ENCODE measurements at regions of chr5 and their contacts with region 1.

Region 1: GRCh38 chr5:115033861-115034260 is 135.8 kb downstream of the TRIM36 start:
- H3K4me3 Mint-ChIP-seq: no peak overlapping the region
- H3K27ac Mint-ChIP-seq: no peak overlapping the region
- H3K4me1 Mint-ChIP-seq: no peaks in the 10 kb centered on the region
- H3K27me3 Mint-ChIP-seq: peaks cover 3% of the 10 kb centered on the region

Region 2: GRCh38 chr5:114789773-114790402 is 244.0 kb before region 1 on chr5:
- intact Hi-C with region 1: loop called (anchors 10 kb)
- H3K4me3 Mint-ChIP-seq: no peak overlapping the region
- H3K27ac Mint-ChIP-seq: no peak overlapping the region
- H3K4me1 Mint-ChIP-seq: no peaks in the 10 kb centered on the region
- H3K27me3 Mint-ChIP-seq: no peaks in the 10 kb centered on the region

Region 3: DNA sequence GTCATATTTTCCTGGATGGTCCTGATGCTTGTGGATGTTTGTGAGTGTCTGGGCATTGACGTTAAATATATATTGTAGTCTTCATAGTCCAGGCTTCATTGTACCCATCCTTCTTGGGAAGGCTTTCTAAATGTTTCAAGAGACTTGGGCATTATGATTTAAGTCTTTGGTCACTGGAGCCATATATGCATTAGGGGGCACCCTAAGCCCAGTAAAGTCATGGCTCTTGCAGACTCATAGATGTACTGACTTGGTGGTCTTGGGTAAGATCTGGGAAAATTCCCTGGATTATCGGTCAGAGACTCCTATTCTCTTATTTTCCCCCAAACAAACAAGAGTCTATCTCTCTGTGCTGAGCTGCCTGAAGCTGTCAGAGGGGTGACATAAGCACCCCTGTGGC is 135.3 kb before region 1 on chr5:
- intact Hi-C with region 1: loop called (anchors 10 kb)
- H3K4me3 Mint-ChIP-seq: no peak overlapping the region
- H3K27ac Mint-ChIP-seq: no peak overlapping the region
- H3K4me1 Mint-ChIP-seq: no peaks in the 10 kb centered on the region
- H3K27me3 Mint-ChIP-seq: no peaks in the 10 kb centered on the region

Region 4: DNA sequence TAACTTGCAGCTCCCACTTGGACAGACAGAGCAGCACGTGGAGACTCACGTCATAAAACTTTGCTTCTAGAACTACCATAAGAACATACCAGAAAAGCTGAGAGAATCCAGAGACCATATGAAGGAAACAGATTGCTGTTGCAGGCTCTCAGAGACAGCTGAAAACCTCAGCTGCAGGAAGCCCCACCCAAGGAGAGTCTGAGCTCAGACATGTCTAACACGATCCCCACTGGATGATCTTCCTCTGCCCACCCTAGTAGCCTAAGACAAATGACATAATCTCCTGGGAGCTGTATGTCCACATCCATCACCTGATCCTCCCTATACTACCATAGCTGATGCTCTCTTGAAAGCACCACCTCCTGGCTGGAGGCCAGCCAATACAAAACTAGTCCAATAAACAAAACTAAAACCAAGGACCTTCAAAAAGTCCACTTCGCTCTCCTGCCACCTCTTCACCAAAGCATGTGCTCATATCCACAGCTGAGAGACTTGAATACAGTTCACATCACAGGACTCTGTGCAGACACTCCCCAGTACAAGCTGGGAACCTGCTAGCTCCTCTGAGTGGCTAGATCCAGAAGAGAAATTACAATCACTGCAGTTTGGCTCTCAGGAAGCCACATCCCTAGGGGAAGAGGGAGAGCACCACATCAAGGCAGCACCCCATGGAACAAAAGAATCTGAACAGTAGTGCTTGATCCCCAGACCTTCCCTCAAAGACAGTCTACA is 121.5 kb before region 1 on chr5:
- intact Hi-C with region 1: no loop called
- H3K4me3 Mint-ChIP-seq: no peak overlapping the region
- H3K27ac Mint-ChIP-seq: no peak overlapping the region
- H3K4me1 Mint-ChIP-seq: no peaks in the 10 kb centered on the region
- H3K27me3 Mint-ChIP-seq: no peaks in the 10 kb centered on the region

Region 5: DNA sequence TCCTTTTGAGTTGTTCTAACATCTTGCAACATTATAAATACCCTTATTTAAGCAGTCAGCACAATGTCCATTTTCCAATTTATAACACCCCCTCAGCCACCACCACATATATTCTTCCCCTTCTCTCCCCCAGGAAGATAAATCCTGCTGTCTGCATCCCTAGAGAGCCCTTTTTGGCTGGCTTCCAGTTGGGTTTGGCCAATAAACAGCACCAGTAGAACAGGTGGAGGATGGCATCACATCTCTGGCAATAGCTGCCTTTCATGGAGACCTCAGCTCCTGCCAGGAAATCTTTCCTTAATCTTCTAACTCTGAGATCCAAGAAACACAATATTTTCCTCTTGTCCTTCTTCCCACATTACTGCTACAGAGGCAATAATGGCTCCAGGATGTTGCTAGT is 82.1 kb after region 1 on chr5:
- intact Hi-C with region 1: no loop called
- H3K4me3 Mint-ChIP-seq: no peak overlapping the region
- H3K27ac Mint-ChIP-seq: no peak overlapping the region
- H3K4me1 Mint-ChIP-seq: no peaks in the 10 kb centered on the region
- H3K27me3 Mint-ChIP-seq: peaks cover 7% of the 10 kb centered on the region